ENCODE measurements at regions of chr11 and their contacts with region 1.

Region 1: GRCh38 chr11:27485930-27486773 is 13.6 kb upstream of the LGR4 start:
- DNase-seq: peak; percentile 40
- H3K4me3 ChIP-seq: no peak overlapping the region; a peak in 1 of 4 replicates
- H3K27ac ChIP-seq: no peak overlapping the region
- H3K4me1 ChIP-seq: no peaks in the 10 kb centered on the region
- H3K27me3 ChIP-seq: no peaks in the 10 kb centered on the region
- CTCF ChIP-seq: peak; percentile 98
- EP300 ChIP-seq: no peak
- RAD21 ChIP-seq: peak; percentile 98

Region 2: DNA sequence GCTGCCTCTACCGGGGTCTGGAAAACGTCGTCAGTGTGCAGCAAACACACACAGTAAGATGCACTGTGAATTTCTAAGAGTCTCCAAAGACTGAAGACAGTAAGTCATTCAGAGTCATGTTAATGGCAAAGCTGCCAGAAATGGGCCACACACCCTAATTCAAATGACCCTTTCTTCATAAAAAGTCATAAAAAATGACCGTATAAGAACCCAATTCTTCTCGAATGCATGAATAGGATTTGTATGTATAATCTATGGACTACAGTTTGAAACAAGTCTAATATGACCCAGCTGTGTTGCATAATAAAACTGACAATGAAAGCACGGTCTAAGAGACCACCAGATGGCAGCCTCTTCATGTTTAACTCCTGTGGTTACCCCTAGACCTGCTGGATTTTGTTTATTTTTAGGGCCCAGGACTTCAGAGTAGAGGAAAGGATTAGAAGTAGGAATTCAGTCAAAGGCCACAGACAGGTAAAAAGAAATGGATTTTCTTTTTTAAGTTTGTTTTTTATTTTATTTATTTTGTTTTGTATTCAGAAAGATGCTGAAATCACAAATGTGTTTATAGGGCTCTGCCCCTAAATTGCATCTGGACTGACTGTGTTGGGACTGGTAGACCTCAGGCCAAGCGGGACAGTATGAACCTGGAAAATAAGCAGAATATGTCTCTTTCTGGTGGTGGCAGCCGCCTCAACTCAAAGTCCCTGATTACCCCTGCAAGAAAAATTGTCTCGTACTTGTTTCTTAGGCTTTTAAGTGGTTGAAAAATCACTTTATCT is 732.2 kb before region 1 on chr11:
- CTCF ChIA-PET with region 1: interaction called, 13 read pairs
- POLR2A ChIA-PET with region 1: no interaction called
- DNase-seq: peak; percentile 45
- H3K4me3 ChIP-seq: no peak overlapping the region; a peak in 1 of 4 replicates
- H3K27ac ChIP-seq: no peak overlapping the region
- H3K4me1 ChIP-seq: peaks cover 0 to 3% of the 10 kb centered on the region in 2 experiments; a peak in 1 of 4 replicates
- H3K27me3 ChIP-seq: no peaks in the 10 kb centered on the region
- CTCF ChIP-seq: peak; percentile 94
- EP300 ChIP-seq: no peak
- RAD21 ChIP-seq: peak; percentile 96

Region 3: GRCh38 chr11:27183672-27184457 is 302.3 kb before region 1 on chr11:
- CTCF ChIA-PET with region 1: interaction called, 223 read pairs
- POLR2A ChIA-PET with region 1: interaction called, 4 read pairs
- DNase-seq: peak; percentile 25
- H3K4me3 ChIP-seq: no peak overlapping the region; a peak in 1 of 4 replicates
- H3K27ac ChIP-seq: no peak overlapping the region
- H3K4me1 ChIP-seq: peaks cover 0 to 12% of the 10 kb centered on the region in 2 experiments; a peak in 2 of 4 replicates
- H3K27me3 ChIP-seq: no peaks in the 10 kb centered on the region
- CTCF ChIP-seq: peak; percentile 87
- EP300 ChIP-seq: no peak
- RAD21 ChIP-seq: peak; percentile 97

Region 4: DNA sequence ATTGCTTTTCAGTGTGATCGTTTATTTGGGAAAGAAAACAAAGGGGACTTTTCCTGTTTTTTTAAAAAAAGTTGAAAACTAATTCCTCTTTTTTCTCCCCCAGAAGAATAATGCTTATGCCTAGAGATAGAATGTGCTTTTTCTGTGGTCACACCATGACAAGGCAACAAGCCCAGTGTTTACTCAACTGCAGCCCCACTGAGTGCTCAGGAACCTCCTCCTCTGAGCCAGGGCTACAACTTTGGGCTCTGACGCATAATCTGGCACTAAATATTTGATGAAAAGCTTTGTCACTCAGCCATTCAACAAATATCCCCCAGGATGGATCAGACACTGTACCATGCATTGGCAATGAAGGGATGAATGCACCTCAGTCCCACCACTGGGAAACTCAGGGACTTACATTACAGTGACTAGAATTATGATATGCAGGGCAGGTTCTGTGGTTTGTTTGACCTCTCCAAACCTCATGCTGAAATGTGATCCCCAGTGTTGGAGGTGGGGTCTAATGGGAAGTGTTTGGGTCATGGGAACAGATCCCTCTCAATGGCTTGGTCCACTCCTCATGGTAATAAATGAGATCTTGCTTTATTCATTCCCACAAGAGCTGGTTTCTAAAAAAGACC is 279.0 kb before region 1 on chr11:
- CTCF ChIA-PET with region 1: interaction called, 11 read pairs
- POLR2A ChIA-PET with region 1: no interaction called
- DNase-seq: no peak
- H3K4me3 ChIP-seq: no peak overlapping the region
- H3K27ac ChIP-seq: no peak overlapping the region
- H3K4me1 ChIP-seq: peaks cover 9 to 54% of the 10 kb centered on the region in 2 experiments; a peak in 3 of 4 replicates
- H3K27me3 ChIP-seq: no peaks in the 10 kb centered on the region
- CTCF ChIP-seq: no peak
- EP300 ChIP-seq: no peak
- RAD21 ChIP-seq: no peak

Region 5: GRCh38 chr11:27370374-27370773 is 115.8 kb before region 1 on chr11:
- CTCF ChIA-PET with region 1: interaction called, 11 read pairs
- POLR2A ChIA-PET with region 1: no interaction called
- DNase-seq: no peak
- H3K4me3 ChIP-seq: no peak overlapping the region
- H3K27ac ChIP-seq: peak overlapping the region; percentile 14 to 47; a peak in 2 of 4 replicates
- H3K4me1 ChIP-seq: peaks cover 7 to 20% of the 10 kb centered on the region in 2 experiments; a peak in 3 of 4 replicates
- H3K27me3 ChIP-seq: no peaks in the 10 kb centered on the region
- CTCF ChIP-seq: no peak
- EP300 ChIP-seq: no peak
- RAD21 ChIP-seq: no peak

Region 6: DNA sequence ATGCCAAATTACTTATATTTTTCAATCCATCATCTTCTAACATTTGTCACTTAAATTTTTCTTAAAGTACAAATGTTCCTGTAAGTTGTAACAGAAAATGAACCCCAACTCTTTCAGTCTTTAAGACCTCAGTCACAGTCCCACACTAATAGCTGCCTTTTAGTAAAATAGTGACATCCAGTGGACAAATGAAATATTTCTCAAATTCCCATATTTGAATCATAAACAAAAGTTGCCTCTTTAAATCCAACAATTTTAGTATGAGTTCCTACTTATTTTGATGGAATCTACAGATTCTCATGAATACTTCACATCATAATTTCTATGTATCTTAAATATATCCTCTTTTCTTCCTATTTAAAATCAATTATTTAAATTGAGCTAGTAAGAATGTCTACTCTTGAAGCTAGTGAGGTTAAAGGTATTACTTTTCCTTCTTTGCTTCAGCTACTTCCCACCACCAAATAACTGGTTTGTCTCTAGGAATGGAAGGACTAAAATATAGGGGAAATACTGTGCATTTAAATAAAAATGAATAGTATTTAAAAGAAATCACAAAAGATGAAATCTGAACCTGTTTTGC is 11.2 kb after region 1 on chr11:
- CTCF ChIA-PET with region 1: interaction called, 100 read pairs
- POLR2A ChIA-PET with region 1: no interaction called
- DNase-seq: peak; percentile 21
- H3K4me3 ChIP-seq: no peak overlapping the region
- H3K27ac ChIP-seq: no peak overlapping the region
- H3K4me1 ChIP-seq: peaks cover 0 to 12% of the 10 kb centered on the region in 2 experiments; a peak in 2 of 4 replicates
- H3K27me3 ChIP-seq: no peaks in the 10 kb centered on the region
- CTCF ChIP-seq: peak; percentile 70
- EP300 ChIP-seq: no peak
- RAD21 ChIP-seq: peak; percentile 62